ENCODE measurements at regions of chr13 and their contacts with region 1.

Region 1: DNA sequence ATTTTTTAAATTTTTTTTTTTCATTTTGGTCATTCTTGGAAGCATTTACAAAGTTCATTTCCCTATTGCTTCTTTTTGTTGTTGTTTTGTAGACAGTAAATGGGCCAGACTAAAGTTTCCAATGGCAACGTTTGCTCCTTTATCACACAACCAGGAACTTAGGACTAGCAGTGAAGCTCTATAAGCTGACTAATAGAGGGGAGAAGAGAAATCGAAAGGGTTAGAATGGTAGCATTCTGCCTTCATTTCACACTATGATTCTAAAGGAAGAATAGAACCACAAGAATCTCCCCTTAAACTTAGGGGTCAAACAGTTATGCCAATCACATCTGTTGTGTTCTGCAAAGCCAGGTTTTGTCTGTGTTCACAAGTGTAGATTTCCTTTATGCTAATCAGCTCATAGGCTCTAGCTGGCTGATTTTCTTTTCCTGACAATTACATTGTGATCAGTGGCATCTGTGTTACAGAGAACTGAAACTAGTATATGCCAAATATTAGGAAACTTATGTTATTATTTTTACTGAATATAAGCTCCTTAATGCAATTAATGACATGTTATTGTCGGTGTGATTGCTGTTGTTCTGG is 467.3 kb downstream of the DACH1 start:
- DNase-seq: no peak
- ATAC-seq: no peak

Region 2: DNA sequence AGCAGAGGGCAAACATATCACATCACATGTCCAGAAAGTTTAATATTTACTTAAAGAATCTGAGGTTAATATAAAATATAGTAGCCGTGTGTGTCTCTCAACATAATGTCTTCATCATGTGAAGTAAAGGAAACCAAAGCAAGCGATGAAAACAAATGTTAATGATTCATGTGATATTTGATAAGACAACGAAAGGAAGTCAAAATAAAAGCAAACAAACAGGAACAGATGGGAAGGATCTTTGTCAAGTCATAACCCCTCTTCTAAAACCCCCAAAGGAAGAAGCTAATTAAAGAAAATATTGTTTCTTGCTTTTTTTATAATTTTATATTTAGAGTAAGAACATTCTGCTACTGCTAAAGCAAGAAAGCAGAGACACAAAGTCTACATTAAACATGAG is 48.5 kb after region 1 on chr13:
- intact Hi-C with region 1: loop called (anchors 10 kb)
- DNase-seq: no peak
- ATAC-seq: no peak

Region 3: DNA sequence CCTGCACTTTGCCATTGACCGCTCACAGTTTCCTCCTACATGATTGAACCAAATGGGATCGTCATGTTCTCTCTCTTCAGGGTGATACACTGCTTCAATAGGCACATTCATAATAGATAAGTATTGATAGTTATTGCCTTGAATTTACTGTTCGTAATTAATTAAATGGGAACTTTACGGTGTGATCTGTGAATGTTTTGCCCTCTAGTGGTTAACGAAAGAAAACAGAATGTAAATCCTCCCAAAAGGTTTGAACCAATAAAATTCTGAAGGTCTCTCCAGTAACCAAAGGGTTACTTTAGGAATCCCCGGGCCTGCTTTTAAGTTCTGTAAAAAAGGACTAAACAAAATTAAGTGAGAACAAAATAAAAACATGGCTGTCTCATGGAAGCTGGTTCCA is 78.0 kb after region 1 on chr13:
- intact Hi-C with region 1: no loop called
- DNase-seq: no peak
- ATAC-seq: no peak

Region 4: DNA sequence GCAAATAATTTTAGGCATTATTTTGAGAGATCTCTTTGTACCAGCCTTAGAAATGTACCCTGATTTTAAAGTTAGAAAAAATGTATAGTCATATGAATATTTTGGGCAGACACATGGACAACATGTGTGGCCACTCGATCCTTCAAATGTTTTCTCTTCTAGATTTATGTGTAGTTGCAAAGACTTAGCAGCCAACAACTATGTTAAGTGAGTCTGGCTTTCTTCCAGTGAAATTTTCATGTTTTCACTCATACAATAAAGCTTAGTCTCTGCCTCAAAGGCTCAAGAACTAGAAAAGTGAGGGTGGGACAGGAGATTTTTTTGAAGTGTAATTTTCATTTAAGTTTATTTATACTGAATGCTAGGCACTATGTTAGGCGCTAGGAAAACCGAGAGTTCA is 674.9 kb after region 1 on chr13:
- intact Hi-C with region 1: no loop called
- DNase-seq: no peak
- ATAC-seq: no peak

Measured in Right ventricle myocardium inferior (tissue), 1 donor.